ENCODE measurements at regions of chr1 and their contacts with region 1.

Region 1: DNA sequence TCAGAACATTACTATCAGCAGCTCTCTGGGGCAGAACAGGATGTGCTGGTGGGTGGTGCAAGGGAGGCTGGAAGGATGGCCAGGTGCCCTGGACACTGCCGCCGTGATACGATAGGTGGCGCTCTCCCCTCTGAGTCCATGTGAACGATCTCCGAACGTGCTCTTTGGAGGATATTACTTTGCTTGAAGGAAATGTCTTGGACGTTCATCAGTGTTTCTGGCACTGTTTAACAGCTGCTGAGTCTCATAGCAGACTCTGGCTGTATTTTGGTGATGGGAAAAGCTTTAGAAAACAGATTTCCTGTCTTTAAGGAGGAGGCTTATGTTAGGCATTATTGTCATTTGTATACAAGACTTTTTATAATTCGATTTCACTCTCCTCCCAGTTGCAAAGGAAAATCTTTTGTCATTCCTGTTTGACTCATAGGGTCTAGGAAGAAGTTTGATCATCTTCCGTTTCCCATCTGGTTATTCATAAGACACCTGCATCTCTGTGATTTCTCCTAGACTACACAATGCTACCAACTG is 386.2 kb upstream of the ADGRL2 start:
- DNase-seq: peak; percentile 78 to 85 (median 80)
- ATAC-seq: peak; percentile 89 to 93 (median 92)
- H3K4me3 ChIP-seq: peak overlapping the region in 1 of 12 donors; percentile 17
- H3K27ac ChIP-seq: peak overlapping the region in 10 of 12 donors; percentile 29 to 69 (median 55)
- H3K4me1 ChIP-seq: peaks cover 0 to 35% (median 18%) of the 10 kb centered on the region in 12 donors
- H3K27me3 ChIP-seq: no peaks in the 10 kb centered on the region
- CTCF ChIP-seq: peak; percentile 76 to 95 (median 91)
- POLR2A ChIP-seq: no peak

Region 2: GRCh38 chr1:81305997-81306452 is 108.5 kb before region 1 on chr1:
- intact Hi-C with region 1: loop called in 6 of 10 experiments (anchors 2 to 10 kb)
- DNase-seq: peak in 3 of 5 donors; percentile 19 to 30 (median 25)
- ATAC-seq: peak; percentile 89 to 91 (median 90)
- H3K4me3 ChIP-seq: peak overlapping the region; percentile 33 to 76 (median 54)
- H3K27ac ChIP-seq: peak overlapping the region in 8 of 12 donors; percentile 11 to 71 (median 44)
- H3K4me1 ChIP-seq: peaks cover 0 to 9% (median 0%) of the 10 kb centered on the region in 12 donors
- H3K27me3 ChIP-seq: no peaks in the 10 kb centered on the region
- CTCF ChIP-seq: peak in 11 of 12 donors; percentile 18 to 69 (median 54)
- POLR2A ChIP-seq: no peak

Region 3: GRCh38 chr1:81478219-81478618 is 63.7 kb after region 1 on chr1:
- intact Hi-C with region 1: loop called in 2 of 10 experiments (anchors 5 kb)
- DNase-seq: peak; percentile 66 to 82 (median 71)
- ATAC-seq: peak; percentile 92 to 99 (median 98)
- H3K4me3 ChIP-seq: peak overlapping the region in 9 of 12 donors; percentile 29 to 44 (median 35)
- H3K27ac ChIP-seq: peak overlapping the region in 10 of 12 donors; percentile 18 to 64 (median 32)
- H3K4me1 ChIP-seq: peaks cover 0 to 17% (median 5%) of the 10 kb centered on the region in 12 donors
- H3K27me3 ChIP-seq: no peaks in the 10 kb centered on the region
- CTCF ChIP-seq: no peak
- POLR2A ChIP-seq: no peak

Region 4: GRCh38 chr1:81498471-81499462 is 84.2 kb after region 1 on chr1:
- intact Hi-C with region 1: loop called in 2 of 10 experiments (anchors 5 to 10 kb)
- DNase-seq: no peak
- ATAC-seq: peak; percentile 34 to 68 (median 51)
- H3K4me3 ChIP-seq: no peak overlapping the region
- H3K27ac ChIP-seq: peak overlapping the region in 9 of 12 donors; percentile 1 to 50 (median 28)
- H3K4me1 ChIP-seq: peaks cover 0 to 24% (median 13%) of the 10 kb centered on the region in 12 donors
- H3K27me3 ChIP-seq: no peaks in the 10 kb centered on the region
- CTCF ChIP-seq: peak in 1 of 12 donors; percentile 10
- POLR2A ChIP-seq: no peak

Region 5: DNA sequence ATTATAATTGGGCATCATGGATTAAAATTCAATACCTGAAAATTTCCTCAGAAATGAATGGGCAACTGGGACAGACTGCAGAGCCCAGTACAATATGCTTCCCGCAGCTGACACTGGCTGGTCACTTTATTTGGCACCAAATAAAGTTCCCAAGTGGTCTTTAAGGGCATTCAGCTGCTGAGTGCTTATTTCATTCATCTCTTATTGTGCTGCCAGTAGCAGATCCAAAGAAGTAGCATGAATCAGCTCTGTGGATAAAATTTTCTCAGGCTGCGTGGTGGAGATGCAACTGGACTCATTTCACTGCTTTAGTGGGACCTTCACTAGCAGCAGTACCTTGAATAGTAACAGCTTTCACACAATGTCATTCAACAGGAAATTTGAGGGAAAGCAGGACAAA is 159.9 kb after region 1 on chr1:
- intact Hi-C with region 1: loop called in 1 of 10 experiments (anchors 10 kb)
- DNase-seq: no peak
- ATAC-seq: peak; percentile 32 to 72 (median 53)
- H3K4me3 ChIP-seq: peak overlapping the region in 4 of 12 donors; percentile 5 to 28 (median 16)
- H3K27ac ChIP-seq: no peak overlapping the region
- H3K4me1 ChIP-seq: peaks cover 0 to 31% (median 14%) of the 10 kb centered on the region in 12 donors
- H3K27me3 ChIP-seq: no peaks in the 10 kb centered on the region
- CTCF ChIP-seq: no peak
- POLR2A ChIP-seq: no peak

Region 6: DNA sequence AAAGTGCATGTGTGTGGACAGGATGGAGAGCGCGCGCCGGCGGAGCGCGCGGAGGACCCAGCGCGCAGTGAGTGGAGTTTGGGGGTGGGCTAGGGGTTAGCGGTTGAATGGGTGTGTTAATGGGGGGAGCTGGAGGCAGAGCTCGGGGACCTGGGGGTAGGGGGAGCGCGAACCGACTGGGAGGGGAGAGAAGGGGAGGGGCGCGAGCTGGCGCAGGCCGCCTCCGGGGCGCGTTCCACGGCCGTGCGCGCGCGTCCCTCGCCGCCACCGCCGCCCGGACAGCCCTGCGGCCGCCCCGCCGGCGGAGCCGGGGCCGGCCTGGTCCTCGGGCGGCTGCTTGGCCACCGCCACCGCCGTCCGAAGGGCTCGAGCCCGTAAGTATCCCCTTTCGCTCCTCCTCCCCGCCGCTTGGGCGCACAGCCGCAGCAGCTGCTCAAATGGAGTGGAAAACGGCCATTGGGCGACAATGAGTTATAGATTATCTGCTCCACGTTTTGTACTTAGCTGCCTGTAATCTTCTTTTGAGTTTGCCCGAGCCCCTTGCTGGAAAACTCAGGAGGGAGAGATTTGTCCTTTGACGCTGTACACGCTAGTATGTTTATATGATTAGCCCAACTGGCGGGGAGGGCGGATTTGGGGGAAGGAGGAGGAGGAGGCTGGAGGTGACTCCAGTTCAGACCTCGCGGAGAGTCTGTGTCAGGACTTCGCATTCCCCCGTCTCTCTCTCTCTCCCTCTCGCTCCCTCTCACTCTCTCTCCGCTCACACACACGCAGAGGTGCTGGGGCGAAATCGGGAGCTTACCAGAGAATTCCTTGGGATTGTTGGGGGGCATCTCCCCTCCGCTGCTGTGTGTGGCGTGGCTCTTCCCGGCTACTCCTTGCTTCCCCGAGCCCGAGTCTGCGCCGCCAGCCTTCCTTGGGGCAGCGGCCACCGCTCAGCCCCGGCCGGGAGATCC is 386.4 kb after region 1 on chr1 and contains the start of gene ADGRL2:
- intact Hi-C with region 1: loop called in 6 of 10 experiments (anchors 2 to 10 kb)
- DNase-seq: peak; percentile 77 to 89 (median 88)
- ATAC-seq: peak; percentile 86 to 91 (median 89)
- H3K4me3 ChIP-seq: peak within 1 kb of the TSS; percentile 65 to 98 (median 92)
- H3K27ac ChIP-seq: peak within 1 kb of the TSS; percentile 96 to 98 (median 98)
- H3K4me1 ChIP-seq: peaks cover 0 to 29% (median 17%) of the 10 kb centered on the region in 12 donors
- H3K27me3 ChIP-seq: peaks cover 0 to 25% (median 0%) of the 10 kb centered on the region in 9 donors
- CTCF ChIP-seq: no peak
- POLR2A ChIP-seq: peak in 1 of 2 donors; percentile 59
- total RNA-seq, gene ADGRL2: 49.7 to 82.8 (median 58.4) TPM

Measured in heart left ventricle (tissue), 16 donors.